ENCODE measurements at regions of chr15 and their contacts with region 1.

Region 1: DNA sequence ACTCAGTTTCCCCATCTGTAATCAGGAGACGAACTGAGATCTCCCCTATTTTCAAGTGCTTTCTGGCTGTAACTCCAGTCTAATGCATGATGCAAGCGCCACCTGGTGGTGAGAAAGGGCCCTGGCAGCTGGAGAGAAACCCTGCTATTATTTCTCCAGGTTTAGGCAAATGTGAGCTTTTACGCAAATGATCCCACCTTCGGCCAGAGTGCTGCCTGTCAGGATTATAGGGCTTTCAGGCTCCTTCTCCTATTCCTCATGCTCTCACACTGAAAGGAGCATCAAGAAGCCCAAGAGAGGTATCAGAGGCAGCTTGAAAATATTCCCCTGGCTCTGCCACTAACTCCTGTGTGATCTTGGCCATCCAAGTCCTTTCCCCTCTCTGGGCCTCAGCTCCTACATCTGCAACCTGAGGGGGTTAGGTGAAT is 93.9 kb upstream of the RASGRF1 start:
- DNase-seq: peak; percentile 70 to 91 (median 82)
- H3K4me3 ChIP-seq: no peak overlapping the region
- H3K27ac ChIP-seq: no peak overlapping the region
- H3K27me3 ChIP-seq: no peaks in the 10 kb centered on the region
- CTCF ChIP-seq: peak; percentile 88 to 100 (median 99)

Region 2: DNA sequence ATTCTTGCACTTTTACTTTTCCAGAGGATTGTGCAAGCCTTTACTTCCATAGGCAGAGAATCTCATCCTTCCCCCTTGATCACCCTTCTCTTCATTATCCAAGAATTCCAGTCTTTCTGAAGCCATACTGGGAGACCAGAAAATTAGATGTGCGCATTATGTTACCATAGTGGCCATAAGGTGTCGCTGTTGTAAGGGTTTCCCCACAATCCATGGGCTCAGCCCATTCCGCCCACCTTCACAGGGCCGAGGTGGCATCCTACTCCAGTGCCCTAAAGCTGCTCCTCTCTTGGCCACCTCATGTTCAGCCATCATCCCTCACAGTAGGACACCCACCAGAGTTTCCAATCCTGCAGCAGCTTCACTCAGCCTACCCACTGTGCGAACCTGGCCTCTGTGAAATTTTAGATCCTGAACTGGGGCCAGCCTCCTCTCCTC is 274.7 kb before region 1 on chr15:
- intact Hi-C with region 1: loop called (anchors 2 to 10 kb)
- DNase-seq: peak in 3 of 10 donors; percentile 26 to 63 (median 52)
- H3K4me3 ChIP-seq: no peak overlapping the region
- H3K27ac ChIP-seq: peak overlapping the region in 20 of 59 donors; percentile 2 to 63 (median 26)
- H3K27me3 ChIP-seq: no peaks in the 10 kb centered on the region
- CTCF ChIP-seq: peak; percentile 42 to 80 (median 68)